MCF 10A (cell line): ENCODE measurements at regions of chr20 and their contacts with region 1.

Region 1: GRCh38 chr20:33489495-33490022 is 337 bp upstream of the CBFA2T2 start:
- DNase-seq: peak; percentile 96
- H3K4me3 Mint-ChIP-seq: peak overlapping the region; percentile 83
- H3K27ac Mint-ChIP-seq: peak overlapping the region; percentile 75
- H3K4me1 Mint-ChIP-seq: no peaks in the 10 kb centered on the region
- H3K27me3 Mint-ChIP-seq: no peaks in the 10 kb centered on the region
- CTCF ChIP-seq: no peak

Region 2: GRCh38 chr20:33401184-33401920 is 88.2 kb before region 1 on chr20 and contains the start of gene CDK5RAP1:
- CTCF ChIA-PET with region 1: no interaction called
- POLR2A ChIA-PET with region 1: interaction called, 14 read pairs
- intact Hi-C with region 1: no loop called
- DNase-seq: peak; percentile 87
- H3K4me3 Mint-ChIP-seq: peak within 1 kb of the TSS; percentile 96
- H3K27ac Mint-ChIP-seq: peak within 1 kb of the TSS; percentile 89
- H3K4me1 Mint-ChIP-seq: peaks cover 17% of the 10 kb centered on the region
- H3K27me3 Mint-ChIP-seq: no peaks in the 10 kb centered on the region
- CTCF ChIP-seq: no peak
- total RNA-seq, gene CDK5RAP1: 41.0 and 45.0 TPM in 2 replicates

Region 3: GRCh38 chr20:33475381-33476150 is 14.0 kb before region 1 on chr20:
- CTCF ChIA-PET with region 1: interaction called, 4 read pairs
- POLR2A ChIA-PET with region 1: interaction called, 11 read pairs
- intact Hi-C with region 1: no loop called
- DNase-seq: no peak
- H3K4me3 Mint-ChIP-seq: no peak overlapping the region
- H3K27ac Mint-ChIP-seq: no peak overlapping the region
- H3K4me1 Mint-ChIP-seq: no peaks in the 10 kb centered on the region
- H3K27me3 Mint-ChIP-seq: no peaks in the 10 kb centered on the region
- CTCF ChIP-seq: no peak

Region 4: DNA sequence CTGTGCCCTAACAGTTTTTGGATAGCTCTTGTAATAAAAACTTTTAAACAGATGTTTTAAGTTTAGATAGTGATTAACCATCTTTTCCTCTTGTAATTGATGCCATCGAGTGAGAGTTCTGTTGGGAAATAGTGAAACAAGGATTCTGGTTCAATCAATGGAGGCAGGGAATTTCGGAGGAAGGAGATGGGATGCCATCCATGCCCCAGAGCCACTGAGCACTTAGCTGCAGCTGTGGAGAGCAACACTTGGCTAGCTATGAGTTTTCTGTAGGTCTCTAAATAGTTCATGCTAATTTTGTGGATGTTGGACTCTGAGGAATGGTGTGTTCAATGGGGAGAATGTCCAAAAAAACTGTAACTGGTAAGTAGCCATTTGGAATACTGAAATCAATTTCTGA is 17.0 kb after region 1 on chr20:
- CTCF ChIA-PET with region 1: interaction called, 3 read pairs
- POLR2A ChIA-PET with region 1: interaction called, 36 read pairs
- intact Hi-C with region 1: no loop called
- DNase-seq: no peak
- H3K4me3 Mint-ChIP-seq: no peak overlapping the region
- H3K27ac Mint-ChIP-seq: no peak overlapping the region
- H3K4me1 Mint-ChIP-seq: peaks cover 4% of the 10 kb centered on the region
- H3K27me3 Mint-ChIP-seq: no peaks in the 10 kb centered on the region
- CTCF ChIP-seq: no peak

Region 5: DNA sequence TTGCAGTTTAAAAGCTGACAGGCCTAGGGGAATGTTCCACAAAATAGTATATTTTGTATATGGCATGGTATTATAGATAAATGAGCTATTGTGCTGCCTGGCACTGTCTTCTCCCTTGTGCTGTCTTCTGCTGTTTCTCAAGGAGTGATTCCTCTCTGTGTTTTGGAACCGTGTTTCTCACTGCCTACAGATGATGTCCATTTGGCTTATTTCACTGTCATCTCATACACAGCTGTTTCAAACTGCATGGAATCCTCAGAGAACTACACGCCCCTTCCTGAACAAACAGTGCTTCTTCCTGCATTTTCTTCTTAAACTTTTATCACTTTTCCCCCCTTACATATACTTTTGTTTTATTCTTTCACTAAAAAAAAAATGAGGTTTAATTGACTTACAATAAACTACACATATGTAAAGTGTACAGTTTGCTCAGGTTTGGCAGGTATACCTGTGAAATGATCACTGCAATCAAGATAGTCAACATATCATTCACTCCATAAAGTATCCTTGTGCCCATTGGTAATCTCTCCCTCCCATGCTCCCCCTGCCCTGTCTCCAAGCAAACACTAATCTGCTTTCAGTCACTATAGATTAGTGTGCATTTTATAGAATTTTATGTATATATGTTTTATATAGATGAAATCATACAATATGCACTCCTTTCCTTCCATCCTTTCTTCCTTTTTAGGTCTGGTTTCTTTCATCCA is 43.3 kb after region 1 on chr20:
- CTCF ChIA-PET with region 1: no interaction called
- POLR2A ChIA-PET with region 1: interaction called, 10 read pairs
- intact Hi-C with region 1: no loop called
- DNase-seq: no peak
- H3K4me3 Mint-ChIP-seq: no peak overlapping the region
- H3K27ac Mint-ChIP-seq: no peak overlapping the region
- H3K4me1 Mint-ChIP-seq: peaks cover 16% of the 10 kb centered on the region
- H3K27me3 Mint-ChIP-seq: no peaks in the 10 kb centered on the region
- CTCF ChIP-seq: no peak

Region 6: DNA sequence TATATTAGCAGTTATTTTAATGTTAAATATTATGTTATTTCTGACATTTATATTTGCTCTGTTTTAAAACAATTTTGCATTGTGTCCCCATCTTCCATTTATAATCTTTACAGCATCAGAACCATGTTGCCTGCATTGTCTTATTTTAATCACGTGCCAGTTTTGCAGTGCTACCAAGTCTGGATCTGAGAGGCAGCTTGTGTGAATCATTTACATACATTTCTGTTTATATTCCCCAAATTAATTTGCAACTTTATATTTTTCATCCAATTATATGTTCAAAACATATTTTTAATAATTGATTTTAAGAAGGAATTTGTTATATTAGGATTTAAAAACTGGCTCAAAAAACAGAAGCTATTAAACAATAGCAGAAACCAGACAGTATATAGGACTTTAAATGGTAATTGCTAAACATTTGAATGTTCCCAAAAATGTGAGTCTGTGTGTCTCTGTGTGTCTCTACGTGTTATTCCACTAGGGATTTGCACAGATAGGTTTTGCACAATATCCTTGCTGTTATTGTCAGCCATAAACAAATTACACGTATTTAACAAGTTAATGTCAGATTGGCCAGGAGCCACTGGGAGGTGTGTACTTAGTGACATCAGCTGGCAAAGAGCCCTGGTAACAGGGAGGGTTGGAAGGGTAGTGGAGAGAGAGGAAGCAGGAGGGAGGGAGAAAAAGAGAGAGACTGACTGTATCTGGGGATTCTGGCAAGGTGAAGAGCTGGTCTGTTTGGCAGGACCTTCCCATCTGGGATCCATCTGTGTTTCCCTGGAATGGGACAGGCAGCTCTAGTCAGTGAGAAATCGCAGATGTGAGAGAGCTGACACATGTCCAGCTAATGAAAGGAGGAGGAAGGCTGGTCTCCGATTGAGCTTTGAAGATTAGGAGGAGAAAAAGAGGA is 72.4 kb after region 1 on chr20:
- CTCF ChIA-PET with region 1: no interaction called
- POLR2A ChIA-PET with region 1: interaction called, 22 read pairs
- intact Hi-C with region 1: no loop called
- DNase-seq: peak; percentile 95
- H3K4me3 Mint-ChIP-seq: peak overlapping the region; percentile 66
- H3K27ac Mint-ChIP-seq: peak overlapping the region; percentile 65
- H3K4me1 Mint-ChIP-seq: peaks cover 8% of the 10 kb centered on the region
- H3K27me3 Mint-ChIP-seq: no peaks in the 10 kb centered on the region
- CTCF ChIP-seq: no peak

Region 7: GRCh38 chr20:33568378-33568777 is 78.8 kb after region 1 on chr20:
- CTCF ChIA-PET with region 1: no interaction called
- POLR2A ChIA-PET with region 1: interaction called, 18 read pairs
- intact Hi-C with region 1: no loop called
- DNase-seq: no peak
- H3K4me3 Mint-ChIP-seq: no peak overlapping the region
- H3K27ac Mint-ChIP-seq: peak overlapping the region; percentile 74
- H3K4me1 Mint-ChIP-seq: peaks cover 24% of the 10 kb centered on the region
- H3K27me3 Mint-ChIP-seq: no peaks in the 10 kb centered on the region
- CTCF ChIP-seq: no peak